Activated CD4-positive, alpha-beta T cell treated with anti-CD3 and anti-CD28 coated beads for 36 hours (primary cell): ENCODE measurements at regions of chr17 and their contacts with region 1.

Region 1: GRCh38 chr17:66514227-66514806 is 211.9 kb downstream of the PRKCA start:
- DNase-seq: peak; percentile 55
- ATAC-seq: peak; percentile 85
- H3K4me3 Mint-ChIP-seq: no peak overlapping the region
- H3K27ac Mint-ChIP-seq: peak overlapping the region; percentile 74
- H3K4me1 Mint-ChIP-seq: peaks cover 87% of the 10 kb centered on the region
- H3K27me3 Mint-ChIP-seq: no peaks in the 10 kb centered on the region

Region 2: GRCh38 chr17:66426397-66427033 is 87.8 kb before region 1 on chr17:
- CTCF ChIA-PET with region 1: no interaction called
- POLR2A ChIA-PET with region 1: no interaction called
- intact Hi-C with region 1: loop called in 1 of 2 experiments (anchors 2 kb)
- DNase-seq: peak; percentile 60
- ATAC-seq: peak; percentile 94
- H3K4me3 Mint-ChIP-seq: peak overlapping the region; percentile 4
- H3K27ac Mint-ChIP-seq: peak overlapping the region; percentile 88
- H3K4me1 Mint-ChIP-seq: peaks cover 77% of the 10 kb centered on the region
- H3K27me3 Mint-ChIP-seq: no peaks in the 10 kb centered on the region

Region 3: DNA sequence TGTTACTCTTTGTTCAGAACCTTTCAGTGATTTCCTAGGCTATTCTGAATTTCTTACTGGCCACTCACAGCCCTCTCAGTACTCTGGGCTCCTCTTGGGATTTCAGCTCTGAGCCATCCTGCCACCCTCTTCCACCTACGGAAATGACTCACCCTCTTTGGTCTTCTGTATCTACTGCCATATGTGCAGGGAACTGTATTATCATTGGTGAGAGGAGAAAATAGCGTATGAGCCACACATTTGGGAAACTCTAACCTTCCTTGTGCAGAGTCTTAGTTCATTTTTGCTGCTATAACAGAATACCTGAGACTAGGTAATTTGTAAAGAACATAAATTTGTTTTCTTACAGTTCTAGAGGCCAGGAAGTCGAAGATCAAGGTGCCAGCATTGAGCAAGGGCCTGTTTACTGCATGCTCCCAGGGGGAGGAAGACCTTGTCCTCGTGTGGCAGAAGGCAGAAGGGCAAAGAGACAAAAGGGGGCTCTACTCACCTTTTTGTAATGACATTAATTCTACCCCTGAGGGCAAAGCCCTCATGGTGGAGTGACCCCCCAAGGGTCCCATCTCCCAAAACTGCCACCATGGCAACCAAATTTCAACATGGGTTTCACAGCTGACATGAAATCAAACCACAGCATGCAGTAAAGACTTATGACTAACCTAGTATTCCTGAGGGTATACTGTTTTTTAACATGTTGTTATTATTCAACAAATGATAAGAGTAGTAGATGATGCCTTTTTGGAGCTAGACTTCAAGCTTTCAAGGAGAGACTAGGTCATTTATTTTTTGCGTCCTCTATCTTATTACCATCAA is 20.1 kb before region 1 on chr17:
- CTCF ChIA-PET with region 1: no interaction called
- POLR2A ChIA-PET with region 1: no interaction called
- intact Hi-C with region 1: no loop called
- DNase-seq: peak; percentile 27
- ATAC-seq: peak; percentile 88
- H3K4me3 Mint-ChIP-seq: no peak overlapping the region
- H3K27ac Mint-ChIP-seq: peak overlapping the region; percentile 73
- H3K4me1 Mint-ChIP-seq: peaks cover 61% of the 10 kb centered on the region
- H3K27me3 Mint-ChIP-seq: no peaks in the 10 kb centered on the region

Region 4: GRCh38 chr17:66526827-66527226 is 12.5 kb after region 1 on chr17:
- CTCF ChIA-PET with region 1: no interaction called
- POLR2A ChIA-PET with region 1: no interaction called
- intact Hi-C with region 1: no loop called
- DNase-seq: no peak
- ATAC-seq: no peak
- H3K4me3 Mint-ChIP-seq: no peak overlapping the region
- H3K27ac Mint-ChIP-seq: no peak overlapping the region
- H3K4me1 Mint-ChIP-seq: peaks cover 52% of the 10 kb centered on the region
- H3K27me3 Mint-ChIP-seq: no peaks in the 10 kb centered on the region

Region 5: DNA sequence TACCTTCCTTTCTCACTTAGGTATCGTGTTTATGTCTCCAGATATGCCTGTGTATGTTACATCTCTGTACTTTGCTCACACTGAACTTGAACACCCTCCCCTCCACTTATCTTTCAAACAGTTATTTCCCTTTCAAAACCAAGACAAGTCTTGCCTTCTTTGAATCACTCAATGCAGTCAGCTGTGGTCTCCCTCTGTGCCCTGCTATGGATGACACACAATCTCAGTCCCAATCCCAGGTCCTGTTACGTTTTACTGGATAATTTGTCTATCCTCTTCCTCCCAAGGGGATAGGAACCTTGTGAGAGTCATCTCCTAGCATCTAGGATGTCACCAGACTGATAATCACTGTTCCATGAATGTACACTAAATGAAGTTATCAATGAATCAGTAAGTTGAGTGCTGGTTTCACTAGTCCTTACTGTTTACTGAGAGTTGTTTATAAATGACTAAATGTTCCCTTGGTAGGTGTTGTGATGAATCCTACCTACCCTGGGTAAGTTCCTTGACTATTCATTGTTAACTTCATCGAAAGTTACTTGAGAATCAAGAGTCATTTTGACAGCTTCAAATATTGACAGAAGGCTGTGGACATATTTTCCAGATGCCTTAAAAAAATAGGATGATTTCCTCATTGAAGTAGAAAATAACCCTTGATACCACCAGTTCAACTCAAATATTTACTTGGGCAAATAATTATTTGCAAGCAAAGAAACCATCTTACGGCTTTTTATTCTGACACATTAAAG is 33.0 kb after region 1 on chr17:
- CTCF ChIA-PET with region 1: no interaction called
- POLR2A ChIA-PET with region 1: no interaction called
- intact Hi-C with region 1: loop called (anchors 1 kb)
- DNase-seq: no peak
- ATAC-seq: peak; percentile 80
- H3K4me3 Mint-ChIP-seq: no peak overlapping the region
- H3K27ac Mint-ChIP-seq: peak overlapping the region; percentile 81
- H3K4me1 Mint-ChIP-seq: peaks cover 63% of the 10 kb centered on the region
- H3K27me3 Mint-ChIP-seq: no peaks in the 10 kb centered on the region

Region 6: DNA sequence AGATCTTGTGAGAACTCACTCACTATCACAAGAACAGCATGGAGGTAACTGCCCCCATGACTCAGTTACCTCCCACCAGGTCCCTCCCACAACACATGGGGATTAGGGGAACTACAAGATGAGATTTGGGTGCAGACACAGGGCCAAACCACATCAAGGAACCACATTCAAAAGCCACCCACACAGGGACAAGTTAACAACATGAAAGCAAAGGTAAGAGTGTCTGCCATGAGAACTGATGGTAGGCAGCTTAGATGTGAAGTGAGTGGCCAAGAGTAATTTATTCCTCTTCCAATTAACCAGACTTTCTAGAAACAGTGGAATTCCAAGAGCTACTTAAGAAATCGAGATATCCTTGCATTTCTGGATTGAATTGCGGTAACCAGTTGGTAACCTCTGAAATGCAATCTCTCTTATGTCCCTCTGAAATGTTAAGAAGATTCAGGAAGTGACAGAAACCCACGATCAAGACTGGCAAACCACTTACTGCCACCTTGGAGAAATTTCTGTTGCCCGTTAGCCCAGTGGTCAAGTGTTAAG is 153.2 kb after region 1 on chr17:
- CTCF ChIA-PET with region 1: no interaction called
- POLR2A ChIA-PET with region 1: no interaction called
- intact Hi-C with region 1: loop called in 1 of 2 experiments (anchors 5 kb)
- DNase-seq: peak; percentile 84
- ATAC-seq: peak; percentile 81
- H3K4me3 Mint-ChIP-seq: peak overlapping the region; percentile 1
- H3K27ac Mint-ChIP-seq: peak overlapping the region; percentile 76
- H3K4me1 Mint-ChIP-seq: peaks cover 81% of the 10 kb centered on the region
- H3K27me3 Mint-ChIP-seq: no peaks in the 10 kb centered on the region